Activated T-helper 1 cell treated with anti-CD3 and anti-CD28 coated beads, Interleukin-12 subunit alpha, Interleukin-12 subunit beta, Interleukin-2, Interleukin-4 antibody, amounts not matched to agents 30 ng/mL and 10 ng/mL and 1 ng/mL, durations not matched to agents 14 hours and 24 hours and 36 hours (primary cell): ENCODE measurements at regions of chr2 and their contacts with region 1.

Region 1: DNA sequence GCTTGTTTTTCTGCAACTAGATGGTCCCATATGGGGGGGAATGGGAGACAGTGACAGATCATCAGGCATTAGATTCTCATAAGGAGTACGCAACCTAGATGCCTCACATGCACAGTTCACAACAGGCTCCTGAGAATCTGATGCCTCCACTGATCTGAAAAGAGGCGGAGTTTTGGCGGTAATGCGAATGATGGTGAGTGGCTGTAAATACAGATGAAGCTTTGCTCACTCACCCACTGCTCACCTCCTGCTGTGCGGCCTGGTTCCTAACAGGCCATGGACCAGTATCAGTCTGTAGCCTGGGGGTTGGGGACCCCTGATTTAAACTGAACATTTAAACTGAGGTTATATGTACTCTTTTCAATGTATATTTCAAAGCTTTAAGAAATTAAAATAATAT is 40.7 kb downstream of the SOS1 start:
- DNase-seq: no peak
- H3K4me3 Mint-ChIP-seq: no peak overlapping the region
- H3K27ac Mint-ChIP-seq: no peak overlapping the region
- H3K4me1 Mint-ChIP-seq: peaks cover 36% of the 10 kb centered on the region
- H3K27me3 Mint-ChIP-seq: no peaks in the 10 kb centered on the region

Region 2: DNA sequence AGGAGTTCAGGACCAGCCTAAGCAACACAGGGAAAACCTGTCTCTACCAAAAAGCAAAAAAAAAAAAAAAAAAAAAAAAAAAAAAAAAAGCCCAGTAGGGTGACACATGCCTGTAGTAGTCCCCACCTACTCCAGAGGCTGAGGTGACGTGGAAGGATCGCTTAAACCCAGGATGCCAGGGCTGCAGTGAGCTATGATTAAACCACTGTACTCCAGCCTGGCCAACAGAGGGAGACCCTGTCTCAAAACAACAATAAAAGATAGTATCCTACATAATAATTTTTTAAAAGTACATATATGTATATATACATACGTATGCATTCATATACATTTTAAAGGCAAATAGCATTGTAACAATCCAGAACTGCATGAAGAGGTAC is 11.0 kb before region 1 on chr2:
- intact Hi-C with region 1: loop called (anchors 2 kb)
- DNase-seq: no peak
- H3K4me3 Mint-ChIP-seq: no peak overlapping the region
- H3K27ac Mint-ChIP-seq: peak overlapping the region; percentile 44
- H3K4me1 Mint-ChIP-seq: peaks cover 44% of the 10 kb centered on the region
- H3K27me3 Mint-ChIP-seq: no peaks in the 10 kb centered on the region

Region 3: GRCh38 chr2:39094852-39095306 is 14.7 kb after region 1 on chr2:
- intact Hi-C with region 1: loop called (anchors 1 kb)
- DNase-seq: no peak
- H3K4me3 Mint-ChIP-seq: no peak overlapping the region
- H3K27ac Mint-ChIP-seq: peak overlapping the region; percentile 88
- H3K4me1 Mint-ChIP-seq: peaks cover 64% of the 10 kb centered on the region
- H3K27me3 Mint-ChIP-seq: no peaks in the 10 kb centered on the region